Tibial artery (tissue), 4 donors: ENCODE measurements at regions of chr9 and their contacts with region 1.

Region 1: DNA sequence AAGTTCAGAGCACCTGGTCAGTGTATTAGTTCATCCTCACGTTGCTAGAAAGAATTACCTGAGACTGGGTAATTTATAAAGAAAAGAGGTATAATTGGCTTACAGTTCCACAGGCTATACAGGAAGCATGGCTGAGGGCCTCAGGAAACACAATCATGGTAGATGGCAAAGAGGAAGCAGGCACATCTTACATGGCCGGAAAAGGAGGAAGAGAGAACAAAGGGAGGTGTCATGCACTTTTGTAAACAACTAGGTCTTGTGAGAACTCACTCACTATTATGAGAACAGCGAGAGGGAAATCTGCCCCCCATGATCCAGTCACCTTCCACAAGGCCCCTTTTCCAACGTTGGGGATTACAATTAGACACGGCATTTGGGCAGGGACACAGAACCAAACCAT is 28.8 kb upstream of the CAVIN4 start:
- DNase-seq: no peak
- H3K4me3 ChIP-seq: no peak overlapping the region
- H3K27ac ChIP-seq: no peak overlapping the region
- H3K4me1 ChIP-seq: no peaks in the 10 kb centered on the region
- H3K27me3 ChIP-seq: no peaks in the 10 kb centered on the region
- CTCF ChIP-seq: no peak

Region 2: DNA sequence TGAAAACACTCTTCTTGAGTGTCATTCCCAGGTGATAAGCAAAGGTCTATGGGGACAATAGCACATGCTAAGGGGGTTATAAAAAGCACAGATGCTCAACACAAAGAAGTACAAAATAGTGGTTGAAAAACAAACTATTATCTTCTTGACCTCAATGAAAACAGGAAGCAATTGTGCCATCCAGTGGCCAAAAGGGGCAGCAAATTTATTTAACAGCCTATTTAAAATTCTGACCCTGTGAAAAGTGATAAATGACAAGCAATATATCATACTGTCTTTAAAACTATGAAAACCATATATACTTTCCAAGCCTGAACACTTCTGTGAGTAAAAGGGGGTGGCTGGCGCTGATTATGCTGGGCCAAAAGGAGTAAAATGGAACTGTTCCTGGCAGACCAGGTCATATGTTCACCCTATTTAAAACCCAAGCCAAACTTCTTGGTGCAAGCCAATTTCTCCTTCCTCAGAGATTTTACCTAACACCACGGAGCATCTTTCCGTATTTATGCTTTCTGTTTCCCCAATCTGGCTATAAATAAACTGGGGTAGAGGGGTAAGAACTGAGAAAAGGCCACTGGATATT is 226.0 kb before region 1 on chr9:
- intact Hi-C with region 1: no loop called
- DNase-seq: no peak
- H3K4me3 ChIP-seq: no peak overlapping the region
- H3K27ac ChIP-seq: no peak overlapping the region
- H3K4me1 ChIP-seq: no peaks in the 10 kb centered on the region
- H3K27me3 ChIP-seq: no peaks in the 10 kb centered on the region
- CTCF ChIP-seq: peak; percentile 47 to 62

Region 3: GRCh38 chr9:100739681-100740080 is 190.6 kb after region 1 on chr9:
- intact Hi-C with region 1: loop called (anchors 10 kb)
- DNase-seq: no peak
- H3K4me3 ChIP-seq: no peak overlapping the region
- H3K27ac ChIP-seq: no peak overlapping the region
- H3K4me1 ChIP-seq: no peaks in the 10 kb centered on the region
- H3K27me3 ChIP-seq: no peaks in the 10 kb centered on the region
- CTCF ChIP-seq: no peak